Mammary epithelial cell (primary cell): ENCODE measurements at regions of chr12 and their contacts with region 1.

Region 1: GRCh38 chr12:6927379-6928024 is at the start of gene ATN1:
- DNase-seq: peak; percentile 48
- H3K4me3 ChIP-seq: peak within 1 kb of the TSS; percentile 82 to 85 (median 84)
- H3K27ac ChIP-seq: peak within 1 kb of the TSS; percentile 65
- H3K4me1 ChIP-seq: peaks cover 46% of the 10 kb centered on the region
- H3K27me3 ChIP-seq: no peaks in the 10 kb centered on the region
- CTCF ChIP-seq: no peak
- total RNA-seq, gene ATN1: 12.2 to 73.5 TPM

Region 2: GRCh38 chr12:6873094-6874014 is 54.1 kb before region 1 on chr12 and contains the start of gene SPSB2:
- CTCF ChIA-PET with region 1: interaction called, 3 read pairs
- dilution Hi-C with region 1: no loop called
- in situ Hi-C with region 1: no loop called
- intact Hi-C with region 1: loop called (anchors 1 kb)
- DNase-seq: peak; percentile 89
- H3K4me3 ChIP-seq: peak within 1 kb of the TSS; percentile 68 to 88 (median 84)
- H3K27ac ChIP-seq: peak within 1 kb of the TSS; percentile 56
- H3K4me1 ChIP-seq: peaks cover 45% of the 10 kb centered on the region
- H3K27me3 ChIP-seq: no peaks in the 10 kb centered on the region
- CTCF ChIP-seq: no peak
- total RNA-seq, gene SPSB2: 7.8 to 9.8 TPM

Region 3: GRCh38 chr12:6937481-6938297 is 10.2 kb after region 1 on chr12:
- CTCF ChIA-PET with region 1: interaction called, 35 read pairs
- dilution Hi-C with region 1: no loop called
- in situ Hi-C with region 1: no loop called
- intact Hi-C with region 1: loop called (anchors 1 kb)
- DNase-seq: peak; percentile 95
- H3K4me3 ChIP-seq: peak overlapping the region; percentile 33 to 59 (median 48)
- H3K27ac ChIP-seq: peak overlapping the region; percentile 14
- H3K4me1 ChIP-seq: peaks cover 31% of the 10 kb centered on the region
- H3K27me3 ChIP-seq: no peaks in the 10 kb centered on the region
- CTCF ChIP-seq: peak; percentile 74 to 96

Region 4: GRCh38 chr12:7042842-7043241 is 115.3 kb after region 1 on chr12:
- CTCF ChIA-PET with region 1: no interaction called
- dilution Hi-C with region 1: no loop called
- in situ Hi-C with region 1: no loop called
- intact Hi-C with region 1: loop called (anchors 1 kb)
- DNase-seq: peak; percentile 52
- H3K4me3 ChIP-seq: no peak overlapping the region
- H3K27ac ChIP-seq: no peak overlapping the region
- H3K4me1 ChIP-seq: peaks cover 13% of the 10 kb centered on the region
- H3K27me3 ChIP-seq: no peaks in the 10 kb centered on the region
- CTCF ChIP-seq: peak; percentile 40 to 56

Region 5: GRCh38 chr12:7108796-7109571 is 181.5 kb after region 1 on chr12 and contains the start of gene C1RL:
- CTCF ChIA-PET with region 1: no interaction called
- dilution Hi-C with region 1: no loop called
- in situ Hi-C with region 1: no loop called
- intact Hi-C with region 1: loop called (anchors 1 kb)
- DNase-seq: peak; percentile 75
- H3K4me3 ChIP-seq: peak within 1 kb of the TSS; percentile 75 to 80 (median 76)
- H3K27ac ChIP-seq: peak within 1 kb of the TSS; percentile 81
- H3K4me1 ChIP-seq: peaks cover 23% of the 10 kb centered on the region
- H3K27me3 ChIP-seq: no peaks in the 10 kb centered on the region
- CTCF ChIP-seq: peak; percentile 96 to 99
- total RNA-seq, gene C1RL: 32.1 to 38.3 TPM